Heart left ventricle (tissue), 16 donors: ENCODE measurements at regions of chr7 and their contacts with region 1.

Region 1: DNA sequence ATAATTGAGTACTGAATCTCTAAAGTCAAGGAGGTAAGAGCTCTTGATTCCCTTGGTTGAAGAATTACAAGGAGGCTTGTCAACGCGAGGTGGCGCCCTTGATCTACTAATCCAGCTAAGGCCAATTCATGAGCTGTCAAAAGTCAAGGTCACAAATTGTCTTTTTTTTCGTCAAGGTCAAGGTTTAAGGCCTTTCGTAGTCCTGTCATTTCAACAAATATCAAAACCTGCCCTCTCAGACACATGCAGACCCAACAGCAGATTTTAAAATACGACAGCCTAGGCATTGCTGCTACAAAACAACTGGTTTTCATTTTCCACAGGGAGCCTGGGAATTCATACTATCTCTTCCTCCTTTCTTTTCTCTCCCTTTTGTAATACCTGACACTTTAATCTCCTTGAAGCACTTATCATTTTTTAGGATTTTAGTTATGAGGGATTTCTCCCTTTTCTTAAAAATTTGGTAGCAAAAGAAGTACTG is 3.6 kb downstream of the HOXA13 start:
- DNase-seq: peak in 4 of 5 donors; percentile 69 to 86 (median 74)
- ATAC-seq: peak in 2 of 4 donors; percentile 54 to 70
- H3K4me3 ChIP-seq: no peak overlapping the region
- H3K27ac ChIP-seq: peak overlapping the region in 1 of 12 donors; percentile 91
- H3K4me1 ChIP-seq: peaks cover 4 to 50% (median 23%) of the 10 kb centered on the region in 12 donors
- H3K27me3 ChIP-seq: peaks cover 83 to 98% (median 91%) of the 10 kb centered on the region in 9 donors
- CTCF ChIP-seq: peak; percentile 55 to 85 (median 74)
- POLR2A ChIP-seq: no peak

Region 2: GRCh38 chr7:27576360-27576944 is 380.1 kb after region 1 on chr7:
- intact Hi-C with region 1: loop called in 5 of 10 experiments (anchors 5 to 10 kb)
- DNase-seq: no peak
- ATAC-seq: peak in 2 of 4 donors; percentile 48 to 62
- H3K4me3 ChIP-seq: no peak overlapping the region
- H3K27ac ChIP-seq: no peak overlapping the region
- H3K4me1 ChIP-seq: no peaks in the 10 kb centered on the region
- H3K27me3 ChIP-seq: no peaks in the 10 kb centered on the region
- CTCF ChIP-seq: peak; percentile 48 to 77 (median 66)
- POLR2A ChIP-seq: no peak

Region 3: GRCh38 chr7:27774717-27775328 is 578.5 kb after region 1 on chr7:
- intact Hi-C with region 1: loop called in 7 of 10 experiments (anchors 5 to 10 kb)
- DNase-seq: no peak
- ATAC-seq: no peak
- H3K4me3 ChIP-seq: no peak overlapping the region
- H3K27ac ChIP-seq: no peak overlapping the region
- H3K4me1 ChIP-seq: peaks cover 0 to 26% (median 0%) of the 10 kb centered on the region in 12 donors
- H3K27me3 ChIP-seq: no peaks in the 10 kb centered on the region
- CTCF ChIP-seq: peak; percentile 22 to 69 (median 48)
- POLR2A ChIP-seq: no peak

Region 4: GRCh38 chr7:27784393-27785053 is 588.2 kb after region 1 on chr7:
- intact Hi-C with region 1: loop called in 7 of 10 experiments (anchors 5 to 10 kb)
- DNase-seq: no peak
- ATAC-seq: peak in 1 of 4 donors; percentile 41
- H3K4me3 ChIP-seq: no peak overlapping the region
- H3K27ac ChIP-seq: no peak overlapping the region
- H3K4me1 ChIP-seq: peaks cover 0 to 20% (median 2%) of the 10 kb centered on the region in 12 donors
- H3K27me3 ChIP-seq: no peaks in the 10 kb centered on the region
- CTCF ChIP-seq: peak; percentile 36 to 64 (median 56)
- POLR2A ChIP-seq: no peak

Region 5: DNA sequence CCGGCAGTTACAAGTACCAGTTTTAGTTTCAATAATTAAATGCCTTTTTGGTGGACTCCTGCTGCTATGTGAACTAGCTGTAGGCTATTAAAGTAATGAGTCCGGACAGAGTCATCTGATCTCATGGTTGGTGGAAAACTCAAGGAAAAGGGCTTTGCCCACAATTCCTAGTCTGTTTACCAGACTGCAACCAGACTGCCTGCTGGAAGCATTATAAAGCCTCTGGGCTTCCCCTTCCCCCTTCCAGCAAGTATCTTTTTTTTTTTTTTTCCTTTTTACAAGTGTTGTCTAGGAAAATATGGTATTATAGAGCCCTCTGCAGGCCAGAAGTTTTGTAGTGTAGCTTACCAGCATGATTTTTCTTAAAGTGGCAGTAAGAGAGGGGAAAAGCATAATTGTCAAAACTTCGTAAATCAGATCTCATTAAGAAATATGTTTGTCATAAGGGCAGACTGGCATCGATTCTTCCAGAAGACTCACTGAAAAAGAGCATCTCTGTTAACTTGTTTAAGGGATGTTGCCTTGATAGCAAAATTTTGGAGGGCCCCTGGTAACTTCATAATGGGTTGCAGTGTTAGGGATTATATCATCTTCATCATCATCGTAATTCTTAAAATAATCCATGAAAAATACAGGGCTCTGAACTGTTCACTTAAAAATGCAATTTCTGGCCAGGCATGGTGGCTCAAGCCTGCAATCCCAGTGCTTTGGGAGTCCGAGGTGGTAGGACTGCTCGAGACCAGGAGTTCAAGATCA is 724.9 kb after region 1 on chr7:
- intact Hi-C with region 1: loop called in 9 of 10 experiments (anchors 2 to 5 kb)
- DNase-seq: peak in 2 of 5 donors; percentile 20 to 27
- ATAC-seq: peak in 3 of 4 donors; percentile 47 to 73 (median 59)
- H3K4me3 ChIP-seq: no peak overlapping the region
- H3K27ac ChIP-seq: no peak overlapping the region
- H3K4me1 ChIP-seq: peaks cover 0 to 31% (median 10%) of the 10 kb centered on the region in 12 donors
- H3K27me3 ChIP-seq: no peaks in the 10 kb centered on the region
- CTCF ChIP-seq: peak; percentile 32 to 68 (median 59)
- POLR2A ChIP-seq: no peak

Region 6: GRCh38 chr7:28078036-28078901 is 881.9 kb after region 1 on chr7:
- intact Hi-C with region 1: loop called in 2 of 10 experiments (anchors 5 to 10 kb)
- DNase-seq: peak in 2 of 5 donors; percentile 37 to 60
- ATAC-seq: peak in 3 of 4 donors; percentile 47 to 52 (median 50)
- H3K4me3 ChIP-seq: no peak overlapping the region
- H3K27ac ChIP-seq: peak overlapping the region in 2 of 12 donors; percentile 6 to 14
- H3K4me1 ChIP-seq: peaks cover 0 to 48% (median 28%) of the 10 kb centered on the region in 12 donors
- H3K27me3 ChIP-seq: no peaks in the 10 kb centered on the region
- CTCF ChIP-seq: peak; percentile 86 to 98 (median 96)
- POLR2A ChIP-seq: no peak

Region 7: GRCh38 chr7:28096713-28097112 is 900.4 kb after region 1 on chr7:
- intact Hi-C with region 1: loop called in 7 of 10 experiments (anchors 5 to 10 kb)
- DNase-seq: peak in 3 of 5 donors; percentile 48 to 57 (median 56)
- ATAC-seq: peak; percentile 48 to 71 (median 66)
- H3K4me3 ChIP-seq: no peak overlapping the region
- H3K27ac ChIP-seq: peak overlapping the region in 4 of 12 donors; percentile 0 to 67 (median 18)
- H3K4me1 ChIP-seq: peaks cover 0 to 35% (median 12%) of the 10 kb centered on the region in 12 donors
- H3K27me3 ChIP-seq: no peaks in the 10 kb centered on the region
- CTCF ChIP-seq: peak; percentile 74 to 91 (median 82)
- POLR2A ChIP-seq: no peak